ENCODE measurements at regions of chr3 and their contacts with region 1.

Region 1: GRCh38 chr3:49093853-49094767 is at the start of gene QRICH1:
- DNase-seq: peak; percentile 85
- ATAC-seq: peak; percentile 92
- H3K4me3 ChIP-seq: peak within 1 kb of the TSS; percentile 87 to 90
- H3K27ac ChIP-seq: peak within 1 kb of the TSS; percentile 93
- H3K4me1 ChIP-seq: peaks cover 14% of the 10 kb centered on the region
- H3K27me3 ChIP-seq: no peaks in the 10 kb centered on the region
- CTCF ChIP-seq: no peak; the same call in 1 of the 2 replicates
- total RNA-seq, gene QRICH1: 79.9 TPM

Region 2: DNA sequence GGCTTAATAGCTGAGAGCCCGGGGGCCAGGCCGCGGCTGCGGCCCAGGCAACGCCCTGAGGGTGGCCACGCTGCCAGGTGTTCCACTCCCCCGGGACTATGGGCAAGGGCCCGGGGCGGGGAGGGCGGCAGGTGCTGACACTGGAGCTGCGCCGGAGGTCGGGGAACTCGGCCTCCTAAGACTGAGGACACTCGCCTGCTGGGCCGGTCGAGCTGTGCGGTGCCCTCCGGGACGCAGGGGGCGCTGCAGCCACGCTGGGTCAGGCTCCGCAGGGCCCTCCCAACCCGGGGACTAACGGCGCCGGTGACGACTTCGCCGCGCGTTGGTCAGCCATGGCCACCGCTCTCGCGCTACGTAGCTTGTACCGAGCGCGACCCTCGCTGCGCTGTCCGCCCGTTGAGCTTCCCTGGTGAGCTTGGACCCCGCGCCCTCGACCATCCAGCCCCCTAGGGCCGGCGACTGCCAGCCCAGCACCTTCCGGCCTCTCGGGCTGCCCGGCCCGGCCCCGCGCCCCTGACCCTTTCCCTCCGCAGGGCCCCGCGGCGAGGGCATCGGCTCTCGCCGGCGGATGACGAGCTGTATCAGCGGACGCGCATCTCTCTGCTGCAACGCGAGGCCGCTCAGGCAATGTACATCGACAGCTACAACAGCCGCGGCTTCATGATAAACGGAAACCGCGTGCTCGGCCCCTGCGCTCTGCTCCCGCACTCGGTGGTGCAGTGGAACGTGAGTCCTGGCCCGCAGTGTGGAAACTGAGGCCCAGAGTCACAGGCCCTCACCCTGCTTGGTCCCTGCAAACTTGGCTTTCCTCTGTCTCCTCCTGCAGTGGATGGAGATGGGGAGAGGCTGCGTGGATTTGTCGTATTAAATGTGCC is 72.1 kb before region 1 on chr3 and contains the start of gene NDUFAF3:
- CTCF ChIA-PET with region 1: no interaction called
- POLR2A ChIA-PET with region 1: interaction called, 13 read pairs
- in situ Hi-C with region 1: no loop called
- intact Hi-C with region 1: no loop called
- DNase-seq: no peak
- ATAC-seq: peak; percentile 66
- H3K4me3 ChIP-seq: peak within 1 kb of the TSS; percentile 71 to 90
- H3K27ac ChIP-seq: peak within 1 kb of the TSS; percentile 97
- H3K4me1 ChIP-seq: peaks cover 26% of the 10 kb centered on the region
- H3K27me3 ChIP-seq: no peaks in the 10 kb centered on the region
- CTCF ChIP-seq: peak; percentile 92
- total RNA-seq, gene NDUFAF3: 101 TPM

Region 3: DNA sequence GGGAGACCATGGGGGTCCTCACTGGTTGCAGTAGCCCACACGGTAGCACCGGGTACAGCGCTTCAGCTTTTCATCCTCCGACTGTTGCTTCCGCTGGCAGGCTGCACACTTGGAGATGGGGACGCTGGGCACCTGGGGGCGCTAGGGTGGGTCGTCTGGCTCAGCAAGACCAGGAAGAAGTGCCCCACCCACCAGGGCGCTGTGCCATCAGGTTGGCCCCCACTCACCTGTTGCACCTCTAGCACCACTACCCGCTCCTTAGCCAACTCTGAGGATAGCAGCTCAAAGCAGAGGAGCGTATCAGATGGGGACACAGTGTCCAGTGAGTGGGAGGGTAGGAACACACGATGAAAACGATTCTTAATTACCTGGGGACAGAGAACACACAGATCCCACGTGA is 18.2 kb after region 1 on chr3:
- CTCF ChIA-PET with region 1: no interaction called
- POLR2A ChIA-PET with region 1: interaction called, 12 read pairs
- in situ Hi-C with region 1: no loop called
- intact Hi-C with region 1: no loop called
- DNase-seq: no peak
- ATAC-seq: no peak
- H3K4me3 ChIP-seq: no peak overlapping the region
- H3K27ac ChIP-seq: no peak overlapping the region
- H3K4me1 ChIP-seq: no peaks in the 10 kb centered on the region
- H3K27me3 ChIP-seq: no peaks in the 10 kb centered on the region
- CTCF ChIP-seq: no peak